ENCODE measurements at regions of chr5 and their contacts with region 1.

Region 1: DNA sequence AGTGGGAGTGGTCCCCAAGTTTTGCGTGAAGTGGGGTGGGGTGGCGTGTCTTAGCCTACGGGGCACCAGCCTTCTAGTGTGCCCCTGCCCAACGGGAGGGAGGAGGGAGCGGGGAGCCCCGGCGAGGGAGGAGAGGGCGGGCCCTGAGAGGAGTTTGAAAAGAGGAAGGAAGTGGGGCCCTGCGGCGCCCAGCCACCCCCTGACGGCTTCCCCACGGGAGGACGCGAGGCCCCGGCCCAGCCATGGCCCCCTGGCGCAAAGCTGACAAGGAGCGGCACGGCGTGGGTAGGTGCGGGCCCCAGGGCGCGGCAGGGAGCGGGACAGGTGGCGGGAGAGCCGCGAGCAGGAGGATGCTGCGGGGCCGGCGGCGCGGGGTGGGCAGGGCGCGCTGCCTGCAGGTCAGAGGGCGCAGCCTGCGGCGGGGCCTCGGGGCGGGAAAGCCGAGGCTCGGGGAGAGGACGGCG is at the start of gene DOCK2:
- DNase-seq: peak; percentile 86
- H3K4me3 Mint-ChIP-seq: peak within 1 kb of the TSS; percentile 86
- H3K27ac Mint-ChIP-seq: peak within 1 kb of the TSS; percentile 92
- H3K4me1 Mint-ChIP-seq: peaks cover 56% of the 10 kb centered on the region
- H3K27me3 Mint-ChIP-seq: no peaks in the 10 kb centered on the region

Region 2: GRCh38 chr5:169647566-169647965 is 10.4 kb after region 1 on chr5:
- CTCF ChIA-PET with region 1: interaction called, 14 read pairs
- DNase-seq: no peak
- H3K4me3 Mint-ChIP-seq: no peak overlapping the region
- H3K27ac Mint-ChIP-seq: peak overlapping the region; percentile 73
- H3K4me1 Mint-ChIP-seq: peaks cover 86% of the 10 kb centered on the region
- H3K27me3 Mint-ChIP-seq: no peaks in the 10 kb centered on the region

Region 3: DNA sequence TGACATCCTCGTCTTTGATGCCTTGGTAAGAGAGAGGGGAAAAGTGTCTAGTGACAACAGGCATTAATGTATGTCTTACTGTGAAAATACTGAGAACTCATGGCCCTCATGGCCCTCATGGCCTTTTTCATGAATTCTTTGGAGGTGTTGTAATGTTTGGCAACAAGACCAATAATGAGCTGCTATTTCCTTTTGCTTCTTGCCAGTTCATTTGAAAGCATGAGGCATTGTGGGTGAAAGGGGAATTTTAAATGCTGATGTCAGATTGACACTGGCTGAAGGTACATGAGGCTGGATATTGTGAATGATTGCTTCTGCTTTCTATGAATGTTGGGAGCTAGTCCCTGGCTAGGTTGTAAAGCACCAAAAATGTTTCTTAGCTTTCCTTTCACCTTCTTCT is 79.2 kb after region 1 on chr5:
- CTCF ChIA-PET with region 1: no interaction called
- DNase-seq: no peak
- H3K4me3 Mint-ChIP-seq: no peak overlapping the region
- H3K27ac Mint-ChIP-seq: peak overlapping the region; percentile 11
- H3K4me1 Mint-ChIP-seq: no peaks in the 10 kb centered on the region
- H3K27me3 Mint-ChIP-seq: no peaks in the 10 kb centered on the region

Region 4: GRCh38 chr5:170267431-170268152 is 630.5 kb after region 1 on chr5:
- CTCF ChIA-PET with region 1: no interaction called
- DNase-seq: peak; percentile 87
- H3K4me3 Mint-ChIP-seq: peak overlapping the region; percentile 40
- H3K27ac Mint-ChIP-seq: peak overlapping the region; percentile 87
- H3K4me1 Mint-ChIP-seq: peaks cover 92% of the 10 kb centered on the region
- H3K27me3 Mint-ChIP-seq: no peaks in the 10 kb centered on the region